Activated B cell treated with CpG ODN at 0.5 μM for 24 hours (primary cell): ENCODE measurements at regions of chr6 and their contacts with region 1.

Region 1: DNA sequence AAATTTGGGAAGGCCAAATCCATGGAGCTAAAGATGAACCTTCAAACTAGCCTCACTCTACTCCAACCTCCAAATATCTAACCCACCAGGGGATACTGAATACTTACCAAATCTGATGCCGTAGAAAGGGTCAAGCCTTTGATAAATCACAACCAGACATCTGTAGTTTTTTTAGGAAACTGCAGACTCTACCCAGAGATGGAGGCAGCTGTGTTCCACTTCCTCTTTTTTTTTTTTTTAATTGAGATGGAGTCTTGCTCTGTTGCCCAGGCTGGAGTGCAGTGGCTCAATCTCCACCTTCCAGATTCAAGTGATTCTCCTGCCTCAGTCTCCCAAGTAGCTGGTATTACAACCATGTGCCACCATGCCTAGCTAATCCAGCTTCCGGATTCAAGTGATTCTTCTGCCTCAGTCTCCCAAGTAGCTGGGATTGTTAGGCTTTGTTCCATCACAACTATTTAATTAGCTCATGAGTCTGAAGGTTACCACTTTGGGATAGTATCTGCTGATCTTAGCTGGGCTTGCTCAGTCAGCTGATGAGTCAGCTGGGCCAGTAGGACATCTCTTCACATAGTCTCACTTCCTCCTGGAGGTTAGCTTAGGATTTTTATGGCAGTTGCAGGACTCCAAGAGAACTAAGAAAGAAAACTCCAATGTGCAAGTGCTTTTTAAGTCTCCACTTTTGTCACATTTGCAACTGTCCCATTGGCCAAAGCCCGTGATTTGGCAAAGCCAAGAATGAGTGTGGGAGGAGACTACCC is 13.3 kb downstream of the FRK start:
- DNase-seq: no peak
- ATAC-seq: peak; percentile 52
- H3K4me3 Mint-ChIP-seq: no peak overlapping the region
- H3K27ac Mint-ChIP-seq: no peak overlapping the region
- H3K4me1 Mint-ChIP-seq: peaks cover 13% of the 10 kb centered on the region
- H3K27me3 Mint-ChIP-seq: peaks cover 2% of the 10 kb centered on the region
- CTCF ChIP-seq: no peak

Region 2: DNA sequence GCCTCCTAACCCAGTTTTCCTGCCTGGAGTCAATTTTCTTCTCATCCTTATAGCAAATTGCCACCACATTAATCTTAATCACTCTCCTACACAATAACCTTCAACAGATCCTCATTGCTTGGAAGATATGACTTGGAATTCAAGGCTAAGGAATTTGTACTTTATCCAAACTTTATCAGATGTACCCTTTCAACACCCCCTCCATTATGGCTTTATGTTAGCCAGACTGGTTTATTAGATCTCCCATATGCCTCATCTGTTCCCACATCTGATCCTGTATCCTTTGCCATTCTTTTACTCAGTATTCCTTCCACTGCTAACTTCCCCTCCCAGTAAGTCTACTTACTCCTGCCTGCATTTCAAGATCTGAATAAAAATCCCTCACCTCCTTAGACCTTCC is 17.3 kb after region 1 on chr6:
- CTCF ChIA-PET with region 1: no interaction called
- POLR2A ChIA-PET with region 1: interaction called, 4 read pairs
- intact Hi-C with region 1: loop called (anchors 2 kb)
- DNase-seq: no peak
- ATAC-seq: no peak
- H3K4me3 Mint-ChIP-seq: no peak overlapping the region
- H3K27ac Mint-ChIP-seq: no peak overlapping the region
- H3K4me1 Mint-ChIP-seq: no peaks in the 10 kb centered on the region
- H3K27me3 Mint-ChIP-seq: peaks cover 7% of the 10 kb centered on the region
- CTCF ChIP-seq: no peak